ENCODE measurements at regions of chr10 and their contacts with region 1.

Region 1: GRCh38 chr10:22436884-22437619 is 91.8 kb downstream of the SPAG6 start:
- DNase-seq: peak; percentile 98

Region 2: GRCh38 chr10:22003079-22003913 is 433.8 kb before region 1 on chr10 and contains the start of gene DNAJC1:
- intact Hi-C with region 1: loop called in 1 of 2 experiments (anchors 10 kb)
- DNase-seq: peak; percentile 99
- total RNA-seq, gene DNAJC1: 24.4 to 26.4 TPM

Region 3: DNA sequence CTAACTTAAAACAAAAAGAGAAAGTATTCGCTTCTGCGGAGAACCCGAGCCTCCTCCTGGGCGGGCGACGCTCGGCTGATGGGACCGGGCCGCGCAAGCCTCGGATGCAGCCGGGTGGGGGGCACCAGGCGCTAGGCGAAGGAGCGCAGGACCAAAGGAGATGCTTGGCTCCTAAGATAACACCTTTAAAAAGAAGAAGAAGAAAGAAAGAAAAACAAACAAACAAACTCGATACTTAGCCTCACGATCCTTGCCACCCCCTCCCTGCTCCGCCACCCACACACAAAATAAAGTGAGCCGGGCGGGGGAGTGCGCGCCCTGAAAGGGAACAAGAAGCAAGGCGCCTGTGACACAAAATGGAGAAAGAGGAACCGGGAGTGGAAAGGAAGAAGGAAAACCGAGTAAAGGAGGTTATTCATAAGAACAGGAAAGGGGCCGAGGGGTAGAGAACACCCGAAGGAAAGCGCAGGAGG is 185.3 kb before region 1 on chr10:
- intact Hi-C with region 1: loop called in 1 of 2 experiments (anchors 10 kb)
- DNase-seq: peak; percentile 89

Region 4: GRCh38 chr10:22340362-22341189 is 96.5 kb before region 1 on chr10:
- intact Hi-C with region 1: loop called in 1 of 2 experiments (anchors 10 kb)
- DNase-seq: peak; percentile 91